ENCODE measurements at regions of chr9 and their contacts with region 1.

Region 1: GRCh38 chr9:100216178-100216787 is 117.2 kb downstream of the INVS start:
- DNase-seq: no peak
- ATAC-seq: peak; percentile 92
- H3K4me3 ChIP-seq: no peak overlapping the region
- H3K27ac ChIP-seq: no peak overlapping the region
- H3K4me1 ChIP-seq: no peaks in the 10 kb centered on the region
- H3K27me3 ChIP-seq: no peaks in the 10 kb centered on the region
- CTCF ChIP-seq: peak; percentile 74

Region 2: DNA sequence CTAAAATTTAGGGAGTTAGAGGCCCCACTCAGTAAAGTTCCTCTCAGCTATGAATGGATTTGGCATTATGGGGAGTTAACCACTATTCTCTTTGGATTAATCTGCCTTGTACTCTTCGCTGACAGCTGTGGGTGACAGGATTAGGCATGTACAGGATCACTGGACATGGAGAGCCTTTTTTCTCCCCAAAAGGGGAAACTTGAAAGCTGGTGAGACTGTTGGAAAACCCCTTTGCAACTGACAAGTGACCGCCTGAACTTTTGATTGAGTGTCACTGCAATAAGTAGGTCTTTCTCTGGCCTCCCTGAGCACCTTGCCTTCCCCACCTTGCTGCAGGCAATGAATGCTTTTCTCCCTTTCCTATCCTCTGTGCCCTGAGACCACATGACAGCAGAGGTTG is 185.7 kb before region 1 on chr9:
- intact Hi-C with region 1: loop called (anchors 10 kb)
- DNase-seq: no peak
- ATAC-seq: no peak
- H3K4me3 ChIP-seq: no peak overlapping the region
- H3K27ac ChIP-seq: no peak overlapping the region
- H3K4me1 ChIP-seq: peaks cover 4% of the 10 kb centered on the region
- H3K27me3 ChIP-seq: no peaks in the 10 kb centered on the region
- CTCF ChIP-seq: no peak